ENCODE measurements at regions of chr9 and their contacts with region 1.

Region 1: GRCh38 chr9:6054280-6055099 is 39.1 kb upstream of the RANBP6 start:
- DNase-seq: no peak
- H3K4me3 ChIP-seq: no peak overlapping the region
- H3K27ac ChIP-seq: no peak overlapping the region
- H3K4me1 ChIP-seq: peaks cover 0 to 10% (median 0%) of the 10 kb centered on the region in 3 donors
- H3K27me3 ChIP-seq: no peaks in the 10 kb centered on the region
- CTCF ChIP-seq: peak; percentile 35 to 79 (median 63)
- POLR2A ChIP-seq: no peak

Region 2: DNA sequence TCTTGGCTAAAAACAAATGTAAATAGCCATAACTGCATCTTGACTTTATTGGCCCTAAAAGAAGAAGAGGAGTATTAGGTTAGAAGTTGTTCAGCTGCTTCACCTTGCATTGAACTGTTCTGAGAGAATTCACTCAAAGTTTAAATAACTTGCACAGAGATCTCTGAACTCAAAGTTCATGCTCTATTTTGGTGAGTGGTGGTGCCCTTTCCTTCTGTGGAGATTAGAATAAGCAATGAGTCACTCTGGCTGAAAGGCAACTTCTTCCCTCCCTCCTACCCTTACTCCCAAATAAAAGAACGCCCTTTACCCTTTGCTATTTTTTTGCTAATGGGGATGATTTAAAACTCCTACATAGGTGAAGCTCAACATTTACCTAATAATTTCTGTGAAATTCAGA is 270.5 kb before region 1 on chr9:
- intact Hi-C with region 1: no loop called
- DNase-seq: no peak
- H3K4me3 ChIP-seq: no peak overlapping the region
- H3K27ac ChIP-seq: no peak overlapping the region
- H3K4me1 ChIP-seq: no peaks in the 10 kb centered on the region
- H3K27me3 ChIP-seq: no peaks in the 10 kb centered on the region
- CTCF ChIP-seq: no peak
- POLR2A ChIP-seq: no peak

Region 3: GRCh38 chr9:5886114-5886939 is 168.2 kb before region 1 on chr9:
- intact Hi-C with region 1: loop called (anchors 5 kb)
- DNase-seq: no peak
- H3K4me3 ChIP-seq: no peak overlapping the region
- H3K27ac ChIP-seq: no peak overlapping the region
- H3K4me1 ChIP-seq: peaks cover 0 to 29% (median 6%) of the 10 kb centered on the region in 3 donors
- H3K27me3 ChIP-seq: no peaks in the 10 kb centered on the region
- CTCF ChIP-seq: peak; percentile 51 to 89 (median 78)
- POLR2A ChIP-seq: no peak

Region 4: GRCh38 chr9:6197330-6197729 is 142.8 kb after region 1 on chr9:
- intact Hi-C with region 1: loop called (anchors 5 kb)
- DNase-seq: no peak
- H3K4me3 ChIP-seq: no peak overlapping the region
- H3K27ac ChIP-seq: peak overlapping the region in 1 of 4 donors; percentile 0
- H3K4me1 ChIP-seq: peaks cover 0 to 13% (median 0%) of the 10 kb centered on the region in 3 donors
- H3K27me3 ChIP-seq: no peaks in the 10 kb centered on the region
- CTCF ChIP-seq: peak in 5 of 6 experiments; percentile 21 to 48 (median 37)
- POLR2A ChIP-seq: no peak

Region 5: DNA sequence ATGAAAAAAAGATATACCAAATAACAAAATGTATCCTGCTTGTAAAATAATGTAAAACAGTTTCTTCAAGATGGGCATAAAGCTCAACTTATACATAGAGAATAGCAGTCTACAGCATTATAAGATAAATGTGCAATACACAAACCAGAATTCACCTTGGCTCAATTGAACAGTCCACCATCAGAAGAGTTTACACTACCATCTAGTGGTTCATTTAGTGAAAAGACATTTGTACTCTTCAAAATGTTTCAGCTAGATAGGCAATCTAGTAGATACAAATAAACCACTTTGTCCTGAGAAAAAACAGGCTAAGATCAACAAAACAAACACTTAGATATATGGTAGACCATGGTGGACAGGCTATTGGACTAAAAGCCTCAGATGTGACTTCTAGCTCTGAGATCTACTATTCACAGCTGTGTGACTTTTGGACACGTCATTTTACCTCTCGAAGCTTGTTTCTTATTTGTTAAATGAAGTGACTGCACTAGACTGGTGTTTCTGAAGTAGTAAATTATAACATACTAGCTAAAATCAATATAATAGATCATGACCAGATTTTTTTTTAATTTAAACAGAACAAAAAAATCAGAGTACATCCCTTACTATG is 251.6 kb after region 1 on chr9:
- intact Hi-C with region 1: loop called (anchors 5 kb)
- DNase-seq: no peak
- H3K4me3 ChIP-seq: no peak overlapping the region
- H3K27ac ChIP-seq: no peak overlapping the region
- H3K4me1 ChIP-seq: peaks cover 4 to 25% (median 4%) of the 10 kb centered on the region in 3 donors
- H3K27me3 ChIP-seq: peaks cover 0 to 9% (median 0%) of the 10 kb centered on the region in 4 donors
- CTCF ChIP-seq: peak in 5 of 6 experiments; percentile 53 to 80 (median 64)
- POLR2A ChIP-seq: no peak